CD4-positive, alpha-beta memory T cell (primary cell): ENCODE measurements at regions of chr4 and their contacts with region 1.

Region 1: DNA sequence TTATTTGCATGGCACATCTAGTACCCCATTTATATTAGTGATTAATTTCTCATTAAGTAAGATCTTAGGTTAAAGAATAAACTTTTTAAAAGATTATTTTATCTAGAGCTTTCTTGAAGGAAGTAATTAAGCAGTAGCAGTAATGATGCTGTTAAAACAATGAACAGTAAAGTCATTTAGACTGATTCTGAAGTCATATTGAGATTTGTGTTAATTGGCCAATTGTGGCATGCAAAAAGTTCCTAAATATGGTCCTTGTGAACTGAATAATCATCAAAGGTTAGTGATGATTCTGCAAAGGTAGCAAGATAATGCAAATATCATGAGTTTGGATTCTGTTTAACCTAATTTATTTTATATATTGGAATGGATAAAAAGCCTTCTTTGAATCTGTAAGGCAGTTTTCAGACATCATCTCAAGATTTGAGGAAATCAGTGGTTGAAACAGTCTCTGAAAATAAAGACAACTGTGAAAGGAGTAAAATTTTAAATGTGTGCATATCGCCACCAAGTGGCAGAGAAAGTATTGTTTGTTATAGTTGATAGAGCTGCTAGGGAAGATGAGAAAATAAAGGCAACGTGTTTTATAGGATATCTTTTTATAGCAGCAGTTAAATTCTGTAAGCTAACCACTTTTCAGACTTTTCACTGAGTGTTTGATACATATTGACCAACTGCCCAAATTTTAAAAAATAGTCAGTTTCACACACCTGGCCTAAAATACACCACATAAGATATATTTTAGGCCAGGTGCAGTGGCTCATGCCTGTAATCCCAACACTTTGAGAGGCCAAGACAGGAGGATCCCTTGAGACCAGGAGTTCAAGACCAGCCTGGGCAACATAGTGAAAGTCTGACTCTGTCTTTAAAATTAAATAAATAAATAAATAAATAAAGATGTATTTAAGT is 79.6 kb downstream of the CCKAR start:
- DNase-seq: peak in 4 of 5 donors; percentile 51 to 63 (median 58)
- H3K4me3 ChIP-seq: no peak overlapping the region
- H3K4me3 Mint-ChIP-seq: no peak overlapping the region
- H3K27ac ChIP-seq: no peak overlapping the region
- H3K27ac Mint-ChIP-seq: no peak overlapping the region
- H3K4me1 ChIP-seq: no peaks in the 10 kb centered on the region
- H3K4me1 Mint-ChIP-seq: peaks cover 0 to 3% (median 0%) of the 10 kb centered on the region in 4 donors
- H3K27me3 ChIP-seq: no peaks in the 10 kb centered on the region
- H3K27me3 Mint-ChIP-seq: no peaks in the 10 kb centered on the region

Region 2: GRCh38 chr4:25842229-25842845 is 568.3 kb before region 1 on chr4:
- CTCF ChIA-PET with region 1: interaction called, 3 read pairs
- POLR2A ChIA-PET with region 1: no interaction called
- intact Hi-C with region 1: loop called (anchors 2 kb)
- DNase-seq: peak in 3 of 5 donors; percentile 36 to 41 (median 41)
- H3K4me3 ChIP-seq: no peak overlapping the region
- H3K4me3 Mint-ChIP-seq: peak overlapping the region in 4 of 8 donors; percentile 18 to 63 (median 30)
- H3K27ac ChIP-seq: no peak overlapping the region
- H3K27ac Mint-ChIP-seq: peak overlapping the region in 6 of 7 donors; percentile 13 to 84 (median 48)
- H3K4me1 ChIP-seq: peaks cover 28% of the 10 kb centered on the region
- H3K4me1 Mint-ChIP-seq: peaks cover 33 to 74% (median 46%) of the 10 kb centered on the region in 4 donors
- H3K27me3 ChIP-seq: no peaks in the 10 kb centered on the region
- H3K27me3 Mint-ChIP-seq: no peaks in the 10 kb centered on the region

Region 3: DNA sequence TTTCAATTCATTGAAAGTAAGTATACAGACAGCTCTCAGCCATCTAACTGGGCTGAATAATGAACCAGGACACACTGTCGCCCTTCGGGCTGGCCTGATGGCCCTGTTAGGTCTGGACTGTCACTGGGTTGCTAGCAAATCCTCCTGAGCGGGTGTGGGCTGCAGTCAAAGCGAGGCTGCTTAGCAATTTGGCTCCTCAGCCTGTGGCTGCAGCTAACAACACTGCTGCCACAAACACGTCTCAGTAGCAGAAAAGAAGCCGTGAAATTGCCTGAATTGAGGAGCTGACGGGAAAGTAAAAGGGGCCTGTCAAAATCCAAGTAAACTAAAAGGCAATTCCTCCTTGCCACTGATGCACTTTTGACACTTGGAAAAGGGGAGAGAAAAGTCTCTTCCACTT is 423.8 kb before region 1 on chr4:
- CTCF ChIA-PET with region 1: interaction called, 57 read pairs
- POLR2A ChIA-PET with region 1: no interaction called
- intact Hi-C with region 1: loop called (anchors 1 kb)
- DNase-seq: no peak
- H3K4me3 ChIP-seq: no peak overlapping the region
- H3K4me3 Mint-ChIP-seq: no peak overlapping the region
- H3K27ac ChIP-seq: no peak overlapping the region
- H3K27ac Mint-ChIP-seq: peak overlapping the region in 1 of 7 donors; percentile 48
- H3K4me1 ChIP-seq: peaks cover 6% of the 10 kb centered on the region
- H3K4me1 Mint-ChIP-seq: peaks cover 4 to 13% (median 6%) of the 10 kb centered on the region in 4 donors
- H3K27me3 ChIP-seq: no peaks in the 10 kb centered on the region
- H3K27me3 Mint-ChIP-seq: no peaks in the 10 kb centered on the region

Region 4: DNA sequence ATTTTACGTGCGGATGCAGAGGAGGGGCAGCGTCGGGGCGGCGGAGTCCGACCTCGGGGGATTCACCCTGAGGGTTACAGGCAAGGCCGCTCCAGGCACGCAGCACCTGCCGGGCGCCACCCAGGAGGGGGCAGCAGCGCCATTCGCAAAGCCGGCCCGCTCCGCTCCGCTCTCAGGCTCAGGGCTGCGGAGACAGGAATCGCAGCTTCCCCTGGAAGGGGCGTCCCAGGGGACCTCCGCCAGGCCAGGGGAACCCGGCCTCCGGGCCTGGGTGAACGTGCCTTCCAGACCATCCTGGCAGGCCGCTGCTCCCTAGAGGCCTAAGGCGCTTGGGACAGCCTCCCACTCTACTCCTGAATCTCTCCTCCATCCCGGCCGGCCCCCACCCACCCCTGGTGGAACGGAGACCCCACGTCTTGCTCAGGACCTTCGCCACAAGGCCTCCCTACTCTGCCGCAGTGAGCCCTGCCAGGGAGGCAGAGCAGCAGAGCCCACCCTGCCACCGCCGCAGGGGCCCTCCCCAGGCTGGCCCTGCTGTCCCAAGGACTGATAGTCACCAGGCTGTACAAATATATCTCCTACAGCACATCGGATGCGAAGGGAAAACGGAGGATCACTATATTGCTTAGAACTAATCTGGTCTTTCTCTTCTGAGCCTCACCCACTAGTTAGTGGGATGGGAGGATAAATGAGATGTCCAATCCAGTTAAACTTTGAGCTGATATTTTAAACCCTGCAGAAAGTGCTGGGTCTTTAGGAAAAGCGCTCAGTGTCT is 381.7 kb before region 1 on chr4:
- CTCF ChIA-PET with region 1: interaction called, 30 read pairs
- POLR2A ChIA-PET with region 1: no interaction called
- intact Hi-C with region 1: loop called (anchors 1 kb)
- DNase-seq: peak in 4 of 5 donors; percentile 37 to 49 (median 45)
- H3K4me3 ChIP-seq: no peak overlapping the region
- H3K4me3 Mint-ChIP-seq: peak overlapping the region in 1 of 8 donors; percentile 24
- H3K27ac ChIP-seq: no peak overlapping the region
- H3K27ac Mint-ChIP-seq: no peak overlapping the region
- H3K4me1 ChIP-seq: no peaks in the 10 kb centered on the region
- H3K4me1 Mint-ChIP-seq: peaks cover 0 to 2% (median under 1%) of the 10 kb centered on the region in 4 donors
- H3K27me3 ChIP-seq: no peaks in the 10 kb centered on the region
- H3K27me3 Mint-ChIP-seq: peaks cover 5 to 6% of the 10 kb centered on the region in 2 donors

Region 5: GRCh38 chr4:26081795-26082498 is 328.7 kb before region 1 on chr4:
- CTCF ChIA-PET with region 1: interaction called, 57 read pairs
- POLR2A ChIA-PET with region 1: interaction called, 4 read pairs
- intact Hi-C with region 1: loop called (anchors 1 kb)
- DNase-seq: peak in 4 of 5 donors; percentile 40 to 55 (median 44)
- H3K4me3 ChIP-seq: no peak overlapping the region
- H3K4me3 Mint-ChIP-seq: peak overlapping the region in 2 of 8 donors; percentile 40 to 47
- H3K27ac ChIP-seq: no peak overlapping the region
- H3K27ac Mint-ChIP-seq: peak overlapping the region in 5 of 7 donors; percentile 4 to 62 (median 31)
- H3K4me1 ChIP-seq: peaks cover 9% of the 10 kb centered on the region
- H3K4me1 Mint-ChIP-seq: peaks cover 9 to 18% (median 15%) of the 10 kb centered on the region in 4 donors
- H3K27me3 ChIP-seq: no peaks in the 10 kb centered on the region
- H3K27me3 Mint-ChIP-seq: no peaks in the 10 kb centered on the region